Sigmoid colon (tissue), 7 donors: ENCODE measurements at regions of chr3 and their contacts with region 1.

Region 1: DNA sequence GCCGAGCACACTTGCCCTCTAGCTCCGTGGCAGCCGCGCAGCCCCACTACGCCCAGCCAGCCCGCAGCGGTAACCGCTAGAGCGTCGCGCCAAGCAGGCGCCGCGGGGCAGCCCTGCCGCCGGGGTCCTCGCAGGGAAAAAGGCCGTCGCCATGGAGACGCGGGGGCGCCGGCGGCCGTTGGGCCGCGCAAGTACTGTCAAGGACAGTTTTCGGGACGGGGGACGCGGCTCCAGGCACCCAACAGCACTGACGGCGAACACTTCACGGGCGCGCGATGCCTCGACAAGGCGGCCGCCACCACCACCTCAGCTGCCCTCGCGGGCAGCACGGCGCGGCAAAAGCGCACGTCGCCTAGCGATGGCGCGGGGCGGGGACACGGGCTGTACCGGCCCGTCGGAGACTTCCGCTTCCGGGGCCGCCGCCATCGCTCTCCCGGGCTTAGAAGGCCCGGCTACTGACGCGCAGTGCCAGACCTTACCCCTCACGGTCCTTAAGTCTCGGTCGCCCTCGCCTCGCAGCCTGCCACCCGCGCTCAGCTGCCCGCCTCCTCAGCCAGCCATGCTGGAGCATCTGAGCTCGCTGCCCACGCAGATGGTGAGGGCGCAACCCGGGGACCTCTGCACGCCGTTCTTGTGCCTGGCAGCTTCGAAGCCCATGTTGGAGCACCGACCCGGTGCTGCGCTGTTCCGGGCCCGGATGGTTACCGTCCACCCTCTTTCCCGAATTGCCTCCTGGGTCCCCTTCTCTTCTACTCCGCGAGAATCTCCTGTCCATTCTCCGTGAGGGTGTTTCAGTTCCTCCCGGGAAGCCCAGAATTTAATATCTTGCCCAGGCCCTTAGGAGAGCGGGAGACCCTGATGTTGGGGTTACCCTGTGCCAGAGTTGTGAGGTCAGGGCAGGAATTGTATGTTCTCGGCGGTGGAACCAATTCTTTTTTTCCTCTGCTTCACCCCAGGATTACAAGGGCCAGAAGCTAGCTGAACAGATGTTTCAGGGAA is at the starts of genes GLT8D1 and SPCS1:
- DNase-seq: peak; percentile 89
- H3K4me3 ChIP-seq: peak within 1 kb of the TSS; percentile 63 to 84 (median 68)
- H3K27ac ChIP-seq: peak within 1 kb of the TSS; percentile 86 to 91 (median 88)
- H3K4me1 ChIP-seq: peaks cover 0 to 42% (median 33%) of the 10 kb centered on the region in 4 donors
- H3K27me3 ChIP-seq: no peaks in the 10 kb centered on the region
- CTCF ChIP-seq: no peak
- EP300 ChIP-seq: no peak
- POLR2A ChIP-seq: peak; percentile 53 to 63
- total RNA-seq, gene GLT8D1: 31.5 to 47.4 (median 35.7) TPM
- total RNA-seq, gene SPCS1: 62.0 to 140 (median 109) TPM

Region 2: DNA sequence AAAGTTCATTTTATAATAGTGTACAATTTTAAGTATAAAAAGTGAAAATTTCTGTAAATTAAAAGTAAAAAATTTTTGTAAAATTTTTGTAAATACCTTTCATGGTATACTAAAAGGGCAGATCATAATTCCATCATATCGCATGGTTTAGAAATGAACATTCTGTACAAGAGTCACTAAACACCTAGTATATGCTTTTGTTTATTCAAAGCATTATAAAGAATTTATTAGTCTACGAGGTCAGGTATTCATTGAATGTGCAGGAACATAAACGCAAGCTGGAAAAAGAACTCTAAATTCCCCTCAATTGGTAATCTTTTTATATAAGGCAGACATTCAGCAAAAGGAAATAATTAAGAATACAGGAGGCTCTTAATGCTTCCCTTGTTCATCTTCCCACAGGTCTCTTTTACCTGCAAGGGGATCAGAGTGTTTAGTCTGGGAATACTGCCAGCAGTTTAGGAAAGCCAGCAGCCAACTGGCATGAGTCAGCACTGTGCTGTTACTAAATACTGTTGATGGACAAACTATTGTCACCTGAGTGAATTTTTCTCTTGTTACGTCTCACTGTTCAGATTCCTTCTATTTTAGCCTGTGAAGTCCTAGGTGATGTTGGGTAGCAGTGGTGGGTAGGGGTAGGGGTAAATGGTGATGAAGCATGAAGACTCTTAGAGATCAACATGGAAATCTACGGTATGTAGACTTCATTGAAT is 99.5 kb before region 1 on chr3:
- intact Hi-C with region 1: no loop called
- DNase-seq: no peak
- H3K4me3 ChIP-seq: no peak overlapping the region
- H3K27ac ChIP-seq: peak overlapping the region in 1 of 4 donors; percentile 13
- H3K4me1 ChIP-seq: peaks cover 0 to 16% (median 15%) of the 10 kb centered on the region in 4 donors
- H3K27me3 ChIP-seq: no peaks in the 10 kb centered on the region
- CTCF ChIP-seq: no peak
- EP300 ChIP-seq: no peak
- POLR2A ChIP-seq: no peak

Region 3: DNA sequence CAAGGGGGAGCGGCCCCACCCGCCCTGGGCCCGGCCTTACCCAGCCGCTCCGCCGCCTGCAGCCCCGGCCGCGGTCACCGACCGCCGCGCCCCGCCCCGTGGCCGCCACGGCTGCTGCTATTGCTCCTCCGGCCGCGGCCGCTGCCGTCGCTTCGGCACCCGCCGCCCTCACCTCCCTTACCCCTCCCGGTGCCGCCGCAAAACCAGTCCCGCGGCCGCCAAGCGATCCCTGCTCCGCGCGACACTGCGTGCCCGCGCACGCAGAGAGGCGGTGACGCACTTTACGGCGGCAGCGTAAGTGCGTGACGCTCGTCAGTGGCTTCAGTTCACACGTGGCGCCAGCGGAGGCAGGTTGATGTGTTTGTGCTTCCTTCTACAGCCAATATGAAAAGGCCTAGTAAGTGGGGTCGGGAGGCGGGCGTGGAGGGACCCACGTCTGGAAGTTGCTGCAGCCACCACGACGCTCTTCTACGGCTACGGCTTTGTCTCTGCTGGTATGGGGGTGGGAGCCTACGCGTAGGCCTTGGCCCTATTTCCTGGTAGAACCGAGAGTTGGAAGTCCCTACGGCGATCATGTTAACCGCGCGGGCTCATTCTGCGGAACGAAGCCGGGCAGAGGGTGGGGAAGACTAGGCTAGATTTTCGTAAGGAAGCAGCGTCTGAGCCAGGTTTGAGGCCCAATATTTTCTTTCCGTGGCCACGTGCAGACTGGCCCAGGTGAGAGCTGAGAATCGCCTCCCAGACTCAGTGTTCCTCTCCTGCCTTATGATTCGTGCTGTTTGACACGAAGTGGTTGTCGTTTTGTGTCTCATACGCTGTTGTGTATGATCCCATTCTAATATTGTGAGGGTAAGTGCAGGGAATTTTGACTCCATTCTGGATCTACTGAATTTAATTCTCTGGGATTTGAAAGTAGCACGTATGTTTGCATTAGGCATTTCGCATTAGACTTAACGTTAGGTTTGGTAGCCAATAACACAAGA is 20.0 kb before region 1 on chr3 and contains the starts of genes GNL3 and PBRM1:
- intact Hi-C with region 1: loop called (anchors 1 kb)
- DNase-seq: peak; percentile 96
- H3K4me3 ChIP-seq: peak within 1 kb of the TSS; percentile 72 to 82 (median 76)
- H3K27ac ChIP-seq: peak within 1 kb of the TSS; percentile 90 to 98 (median 94)
- H3K4me1 ChIP-seq: peaks cover 0 to 44% (median 34%) of the 10 kb centered on the region in 4 donors
- H3K27me3 ChIP-seq: no peaks in the 10 kb centered on the region
- CTCF ChIP-seq: no peak
- EP300 ChIP-seq: peak in 1 of 4 donors; percentile 84
- POLR2A ChIP-seq: peak; percentile 39 to 60
- total RNA-seq, gene GNL3: 22.4 to 42.5 (median 36.2) TPM
- total RNA-seq, gene PBRM1: 82.8 to 94.2 (median 90.1) TPM